Dendritic cell treated with granulocyte-macrophage colony-stimulating factor and Interleukin-4, amounts not matched to agents 40 ng/mL and 50 ng/mL, for 4 days (primary cell): ENCODE measurements at regions of chr12 and their contacts with region 1.

Region 1: DNA sequence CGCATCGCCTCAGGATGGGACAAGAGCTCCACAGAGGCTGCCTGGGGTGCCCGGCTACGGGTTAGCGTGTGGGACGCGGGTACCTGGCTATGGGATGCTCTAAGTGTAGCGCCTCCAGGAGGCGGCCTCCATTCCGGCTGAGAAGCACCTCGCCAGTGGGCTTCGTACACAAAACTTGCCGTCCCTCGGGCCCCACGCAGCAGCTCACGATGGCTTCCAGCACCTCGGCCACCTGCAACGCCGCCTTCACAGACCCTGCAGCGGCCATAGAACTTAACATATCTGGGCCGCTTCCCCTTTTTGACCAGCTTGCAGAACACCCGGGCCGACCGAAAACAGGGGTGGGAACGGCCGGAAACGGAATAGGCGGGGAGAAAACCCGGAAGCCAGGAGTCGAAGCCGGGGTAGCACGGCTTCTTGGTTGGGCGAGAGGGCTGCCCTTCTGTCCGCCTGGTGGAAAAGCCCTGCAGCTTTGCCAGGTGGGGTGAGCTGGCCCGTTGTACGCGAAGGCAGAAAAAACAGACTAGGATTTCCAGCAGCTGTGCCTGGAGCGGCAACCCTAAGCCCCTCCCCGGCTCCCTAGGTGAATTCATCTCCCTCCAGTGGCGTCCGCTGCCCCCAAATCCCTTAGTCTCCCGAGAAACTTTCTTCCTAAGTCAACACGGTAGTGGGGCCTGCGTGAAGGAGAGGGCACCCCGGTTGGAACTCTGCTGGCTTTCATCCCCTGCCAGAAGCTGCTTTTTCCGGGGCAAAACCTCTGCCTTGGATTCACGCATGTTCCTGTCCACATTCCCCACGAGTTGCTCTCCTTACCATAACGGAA is at the start of gene BBS10:
- H3K4me3 Mint-ChIP-seq: peak within 1 kb of the TSS; percentile 86
- H3K27ac Mint-ChIP-seq: peak within 1 kb of the TSS; percentile 96
- H3K4me1 Mint-ChIP-seq: peaks cover 20% of the 10 kb centered on the region
- H3K27me3 Mint-ChIP-seq: no peaks in the 10 kb centered on the region

Region 2: DNA sequence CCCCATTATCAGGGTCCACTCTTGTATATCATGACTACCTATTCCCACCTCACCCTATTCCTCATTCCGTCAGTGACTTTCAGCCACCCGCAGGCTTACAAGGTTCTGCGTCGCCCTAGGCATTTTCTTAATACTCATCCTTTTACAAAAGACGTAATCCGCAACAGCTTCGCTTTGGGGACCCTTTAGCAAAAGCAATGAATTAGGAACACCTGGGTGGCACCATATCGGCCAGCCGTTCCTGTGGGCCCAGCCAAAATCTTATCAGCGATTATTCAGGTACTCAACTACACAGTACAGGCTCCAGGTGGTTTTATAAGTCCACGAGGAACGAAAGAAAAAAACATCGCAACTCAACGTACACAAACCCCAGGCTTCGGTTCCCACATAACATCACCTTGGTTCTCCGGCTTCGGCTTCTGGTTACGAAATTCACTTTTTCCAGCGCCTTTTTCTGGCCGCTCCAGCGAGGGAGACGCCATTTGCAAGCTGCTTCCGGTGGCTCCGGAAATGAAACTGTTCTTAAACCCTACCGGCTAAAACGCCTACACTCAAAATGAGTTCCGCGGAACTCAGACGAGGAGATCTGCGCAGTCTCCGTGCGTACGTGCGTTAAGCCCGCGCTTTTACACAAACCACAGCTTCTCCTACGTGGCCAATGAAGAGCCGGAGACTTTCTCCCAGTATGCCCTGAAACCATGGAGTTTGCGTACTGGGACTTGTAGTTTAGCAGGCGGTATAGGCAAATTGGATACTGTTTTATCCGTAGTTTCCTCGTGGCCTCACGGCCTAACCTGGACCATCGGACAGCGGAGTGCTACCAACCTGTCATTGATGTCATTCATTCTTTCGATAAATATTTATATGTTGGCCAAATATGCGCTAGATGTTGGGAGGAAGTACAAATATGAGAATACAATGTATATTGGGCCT is 836.9 kb before region 1 on chr12 and contains the start of gene KRR1:
- intact Hi-C with region 1: loop called (anchors 5 kb)
- H3K4me3 Mint-ChIP-seq: peak within 1 kb of the TSS; percentile 94
- H3K27ac Mint-ChIP-seq: peak within 1 kb of the TSS; percentile 96
- H3K4me1 Mint-ChIP-seq: peaks cover 15% of the 10 kb centered on the region
- H3K27me3 Mint-ChIP-seq: peaks cover 1% of the 10 kb centered on the region

Region 3: GRCh38 chr12:76020731-76021672 is 327.3 kb before region 1 on chr12:
- intact Hi-C with region 1: no loop called
- H3K4me3 Mint-ChIP-seq: no peak overlapping the region
- H3K27ac Mint-ChIP-seq: peak overlapping the region; percentile 9
- H3K4me1 Mint-ChIP-seq: peaks cover 24% of the 10 kb centered on the region
- H3K27me3 Mint-ChIP-seq: peaks cover 5% of the 10 kb centered on the region

Region 4: DNA sequence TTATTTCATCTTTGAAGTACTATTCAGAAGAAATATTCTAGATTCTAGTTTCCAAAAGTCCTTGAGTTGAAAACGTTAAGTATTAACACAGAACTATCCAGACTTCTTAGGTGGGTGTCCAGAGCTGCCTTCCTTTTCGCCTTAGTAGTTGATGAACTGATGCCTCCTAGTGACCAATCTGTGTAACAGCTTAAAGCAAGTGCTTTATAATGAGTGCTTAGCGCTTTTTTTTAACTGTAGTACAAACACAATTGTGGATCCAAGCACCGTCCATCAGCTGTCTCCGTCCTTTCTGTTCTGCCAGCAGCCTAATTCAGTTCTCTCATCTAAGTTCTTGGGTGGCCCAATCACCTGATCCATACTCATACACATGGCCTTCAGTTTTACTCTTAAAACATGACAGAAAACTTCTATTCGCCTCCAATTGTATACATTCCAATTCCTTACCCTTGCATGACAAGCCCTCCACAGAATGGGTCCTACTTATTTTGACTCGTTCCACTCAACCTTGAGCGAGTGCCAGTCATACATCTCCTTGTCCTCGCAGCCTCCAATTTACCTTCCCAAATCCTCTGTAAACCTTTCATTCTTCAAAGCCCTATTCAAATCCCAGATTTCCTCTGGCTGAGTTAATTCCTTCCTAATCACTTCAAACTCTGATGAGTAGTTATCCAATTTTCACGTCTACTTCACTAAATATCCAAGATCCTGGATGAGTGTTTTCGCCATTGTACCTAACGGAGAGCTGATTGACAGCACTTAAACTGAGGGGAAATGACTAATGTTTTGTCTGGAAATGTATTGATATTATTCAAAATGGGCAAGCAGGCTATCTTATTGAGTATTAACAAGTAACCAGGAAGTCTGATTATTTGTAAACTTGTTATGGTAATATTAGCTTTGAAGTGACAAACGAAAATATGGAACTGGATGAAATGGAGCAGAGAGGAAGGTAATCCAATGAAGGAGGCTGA is 310.9 kb before region 1 on chr12:
- intact Hi-C with region 1: loop called (anchors 2 kb)
- H3K4me3 Mint-ChIP-seq: no peak overlapping the region
- H3K27ac Mint-ChIP-seq: no peak overlapping the region
- H3K4me1 Mint-ChIP-seq: peaks cover 10% of the 10 kb centered on the region
- H3K27me3 Mint-ChIP-seq: peaks cover 12% of the 10 kb centered on the region

Region 5: DNA sequence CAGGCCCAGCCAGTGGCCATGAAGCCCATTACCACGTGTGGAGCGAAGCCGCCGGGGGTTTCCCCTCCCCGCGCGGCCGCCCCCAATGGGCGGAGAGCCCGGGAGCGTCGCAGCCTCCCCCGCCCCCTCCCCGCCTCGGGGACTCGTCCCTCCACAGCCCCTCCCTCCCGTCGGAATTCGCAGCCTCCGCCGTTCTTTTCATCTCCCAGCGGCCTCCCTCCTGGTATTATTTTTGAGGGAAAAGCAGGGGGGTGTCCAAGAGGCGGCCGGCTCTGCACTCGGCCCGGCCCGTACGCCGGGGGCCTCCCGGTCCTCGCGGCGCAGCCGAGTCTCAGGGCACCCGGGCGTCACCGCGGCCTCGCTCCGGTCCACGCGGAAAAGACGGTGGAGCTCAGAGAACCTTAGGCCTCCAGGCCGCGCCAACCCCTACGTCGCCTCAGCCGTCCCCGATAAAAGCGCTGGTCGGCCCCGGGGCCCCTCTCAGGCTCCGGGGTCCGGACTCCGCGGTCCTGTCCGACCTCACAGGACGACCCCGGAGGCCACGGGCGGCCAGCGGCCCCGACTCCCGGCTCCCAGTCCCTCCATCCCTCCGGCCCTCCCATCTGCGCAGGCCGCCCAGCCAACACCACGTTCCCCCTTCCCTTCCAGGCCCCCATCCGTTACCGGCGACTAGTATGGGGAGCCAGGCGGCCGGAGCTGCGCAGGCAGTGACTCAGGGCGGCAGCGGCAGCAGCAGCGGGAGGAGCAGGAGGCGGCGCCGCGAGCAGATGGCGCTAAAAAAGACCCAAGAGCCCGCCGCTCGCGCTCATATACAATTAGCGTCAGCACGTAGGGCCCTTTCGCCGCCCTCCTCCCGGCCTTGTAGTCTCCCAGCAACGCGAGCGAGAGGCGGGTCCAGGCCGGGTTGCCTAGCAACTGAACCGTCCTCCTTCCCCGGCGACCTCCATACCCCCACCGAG is 264.1 kb before region 1 on chr12 and contains the start of gene NAP1L1:
- intact Hi-C with region 1: loop called (anchors 1 kb)
- H3K4me3 Mint-ChIP-seq: peak within 1 kb of the TSS; percentile 92
- H3K27ac Mint-ChIP-seq: peak within 1 kb of the TSS; percentile 99
- H3K4me1 Mint-ChIP-seq: peaks cover 35% of the 10 kb centered on the region
- H3K27me3 Mint-ChIP-seq: no peaks in the 10 kb centered on the region

Region 6: DNA sequence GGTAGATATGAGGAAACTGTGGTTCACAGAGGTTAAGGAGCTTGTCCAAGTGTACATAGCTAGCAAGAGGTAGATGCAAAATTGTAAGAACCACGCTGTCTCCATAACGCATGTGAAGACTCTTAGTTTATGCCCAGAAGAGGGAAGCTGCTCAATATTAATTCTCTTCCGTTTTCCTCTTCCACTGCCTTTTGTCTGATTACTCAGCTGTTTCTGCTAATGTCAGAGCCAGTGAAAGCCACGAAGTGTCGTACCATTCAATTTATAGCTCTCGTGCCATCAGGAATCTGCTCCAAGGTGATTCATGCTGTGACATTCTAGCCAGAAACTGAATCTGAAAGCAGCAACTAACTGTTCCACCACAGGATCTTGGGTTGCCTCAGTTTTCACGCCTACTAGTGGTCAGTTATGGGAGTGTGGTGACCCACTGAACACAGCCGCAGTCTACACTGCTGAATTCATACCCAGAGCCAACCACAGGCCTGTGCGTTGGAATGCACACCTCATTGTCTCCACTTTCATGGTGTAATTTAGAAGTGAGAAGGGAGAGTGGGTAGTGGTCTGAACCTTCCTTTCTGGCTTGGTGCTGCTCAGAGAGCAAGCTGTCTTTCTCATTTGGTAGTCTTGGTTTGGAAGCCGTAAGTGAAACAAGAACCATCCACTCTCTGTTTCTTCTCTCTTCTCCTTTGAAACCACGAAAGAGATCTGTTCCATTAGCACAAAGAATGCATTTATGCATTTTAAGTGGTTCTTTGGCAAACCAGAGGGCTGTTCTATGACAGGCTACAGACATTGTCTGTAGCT is 189.6 kb before region 1 on chr12:
- intact Hi-C with region 1: loop called (anchors 10 kb)
- H3K4me3 Mint-ChIP-seq: peak overlapping the region; percentile 52
- H3K27ac Mint-ChIP-seq: peak overlapping the region; percentile 84
- H3K4me1 Mint-ChIP-seq: peaks cover 47% of the 10 kb centered on the region
- H3K27me3 Mint-ChIP-seq: no peaks in the 10 kb centered on the region

Region 7: DNA sequence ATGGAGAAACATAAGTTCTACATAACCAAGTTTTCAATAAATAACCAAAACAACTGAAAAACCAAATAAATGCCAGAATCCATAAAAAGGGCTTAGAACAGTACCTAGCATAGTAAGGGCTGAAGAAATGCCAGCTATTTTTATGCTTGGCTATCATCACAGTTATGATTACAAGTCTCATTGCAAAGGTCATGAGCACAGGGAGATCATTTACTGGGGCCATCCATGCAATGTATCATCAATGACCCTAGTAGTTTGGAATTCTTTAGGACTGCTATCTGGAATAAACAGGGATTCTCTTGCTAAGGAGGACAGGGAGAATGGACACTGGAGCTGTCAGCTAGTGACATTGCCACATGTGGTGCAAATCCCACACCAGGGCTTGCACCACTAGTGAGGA is 171.3 kb before region 1 on chr12:
- intact Hi-C with region 1: loop called (anchors 5 kb)
- H3K4me3 Mint-ChIP-seq: no peak overlapping the region
- H3K27ac Mint-ChIP-seq: no peak overlapping the region
- H3K4me1 Mint-ChIP-seq: peaks cover 29% of the 10 kb centered on the region
- H3K27me3 Mint-ChIP-seq: peaks cover 10% of the 10 kb centered on the region

Region 8: GRCh38 chr12:76299536-76300296 is 48.6 kb before region 1 on chr12:
- intact Hi-C with region 1: no loop called
- H3K4me3 Mint-ChIP-seq: no peak overlapping the region
- H3K27ac Mint-ChIP-seq: no peak overlapping the region
- H3K4me1 Mint-ChIP-seq: no peaks in the 10 kb centered on the region
- H3K27me3 Mint-ChIP-seq: no peaks in the 10 kb centered on the region

Region 9: GRCh38 chr12:76384560-76384959 is 36.3 kb after region 1 on chr12:
- intact Hi-C with region 1: no loop called
- H3K4me3 Mint-ChIP-seq: no peak overlapping the region
- H3K27ac Mint-ChIP-seq: no peak overlapping the region
- H3K4me1 Mint-ChIP-seq: peaks cover under 1% of the 10 kb centered on the region
- H3K27me3 Mint-ChIP-seq: no peaks in the 10 kb centered on the region

Region 10: GRCh38 chr12:76559400-76560085 is 211.3 kb after region 1 on chr12 and contains the start of gene OSBPL8:
- intact Hi-C with region 1: loop called (anchors 1 kb)
- H3K4me3 Mint-ChIP-seq: peak within 1 kb of the TSS; percentile 91
- H3K27ac Mint-ChIP-seq: peak within 1 kb of the TSS; percentile 96
- H3K4me1 Mint-ChIP-seq: peaks cover 29% of the 10 kb centered on the region
- H3K27me3 Mint-ChIP-seq: no peaks in the 10 kb centered on the region

Region 11: DNA sequence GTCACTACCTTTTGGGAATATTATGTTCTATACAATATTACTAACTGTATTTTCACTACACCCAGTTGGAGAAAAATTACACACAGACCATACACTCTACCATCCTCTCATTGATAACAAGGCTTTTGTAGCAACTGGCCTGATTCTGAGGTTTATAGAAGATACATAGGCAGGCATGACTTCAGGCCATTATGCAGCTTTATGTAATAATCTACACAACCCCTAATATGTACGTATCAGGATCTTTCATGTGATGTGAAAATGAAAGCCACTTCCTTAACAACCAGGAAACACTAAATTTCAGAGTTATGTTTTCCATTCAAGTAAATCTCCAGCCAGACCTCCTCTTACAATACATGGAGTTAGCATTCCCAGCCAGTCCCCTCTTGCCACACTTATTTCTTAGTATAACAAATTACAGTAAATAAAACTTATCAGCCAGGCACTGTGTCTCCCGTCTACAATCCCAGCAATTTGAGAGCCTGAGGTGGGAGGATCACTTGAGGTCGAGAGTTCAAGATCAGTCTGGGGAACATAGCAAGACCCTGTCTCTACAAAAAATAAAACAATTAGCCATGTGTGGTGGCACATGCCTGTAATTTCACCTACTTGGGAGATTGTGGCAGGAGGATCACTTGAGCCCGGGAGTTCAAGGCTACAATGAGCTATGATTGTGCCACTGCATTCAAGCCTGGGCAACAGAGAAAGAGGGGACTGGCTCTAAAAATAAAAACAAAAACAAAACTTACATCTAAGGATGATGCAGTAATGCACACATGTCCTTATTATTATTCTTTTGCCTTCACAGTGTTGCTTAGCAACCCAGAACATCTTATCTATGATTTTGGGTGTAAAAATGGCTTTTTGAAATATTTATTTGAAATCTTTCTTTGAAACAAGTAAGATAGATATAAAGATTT is 221.7 kb after region 1 on chr12:
- intact Hi-C with region 1: no loop called
- H3K4me3 Mint-ChIP-seq: no peak overlapping the region
- H3K27ac Mint-ChIP-seq: no peak overlapping the region
- H3K4me1 Mint-ChIP-seq: peaks cover 4% of the 10 kb centered on the region
- H3K27me3 Mint-ChIP-seq: no peaks in the 10 kb centered on the region